Activated CD4-positive, alpha-beta memory T cell treated with anti-CD3 and anti-CD28 coated beads for 36 hours (primary cell): ENCODE measurements at regions of chr13 and their contacts with region 1.

Region 1: GRCh38 chr13:30577401-30577852 is 40.3 kb upstream of the USPL1 start:
- DNase-seq: peak; percentile 80
- H3K4me3 Mint-ChIP-seq: no peak overlapping the region
- H3K27ac Mint-ChIP-seq: peak overlapping the region; percentile 11
- H3K4me1 Mint-ChIP-seq: peaks cover 23% of the 10 kb centered on the region
- H3K27me3 Mint-ChIP-seq: peaks cover 1% of the 10 kb centered on the region

Region 2: GRCh38 chr13:30204564-30204963 is 372.9 kb before region 1 on chr13:
- CTCF ChIA-PET with region 1: no interaction called
- POLR2A ChIA-PET with region 1: no interaction called
- intact Hi-C with region 1: loop called (anchors 5 kb)
- DNase-seq: peak; percentile 39
- H3K4me3 Mint-ChIP-seq: no peak overlapping the region
- H3K27ac Mint-ChIP-seq: no peak overlapping the region
- H3K4me1 Mint-ChIP-seq: peaks cover 8% of the 10 kb centered on the region
- H3K27me3 Mint-ChIP-seq: no peaks in the 10 kb centered on the region

Region 3: GRCh38 chr13:30607908-30608307 is 30.5 kb after region 1 on chr13:
- CTCF ChIA-PET with region 1: interaction called, 3 read pairs
- POLR2A ChIA-PET with region 1: interaction called, 3 read pairs
- intact Hi-C with region 1: loop called (anchors 2 kb)
- DNase-seq: peak; percentile 81
- H3K4me3 Mint-ChIP-seq: no peak overlapping the region
- H3K27ac Mint-ChIP-seq: no peak overlapping the region
- H3K4me1 Mint-ChIP-seq: peaks cover 18% of the 10 kb centered on the region
- H3K27me3 Mint-ChIP-seq: no peaks in the 10 kb centered on the region

Region 4: DNA sequence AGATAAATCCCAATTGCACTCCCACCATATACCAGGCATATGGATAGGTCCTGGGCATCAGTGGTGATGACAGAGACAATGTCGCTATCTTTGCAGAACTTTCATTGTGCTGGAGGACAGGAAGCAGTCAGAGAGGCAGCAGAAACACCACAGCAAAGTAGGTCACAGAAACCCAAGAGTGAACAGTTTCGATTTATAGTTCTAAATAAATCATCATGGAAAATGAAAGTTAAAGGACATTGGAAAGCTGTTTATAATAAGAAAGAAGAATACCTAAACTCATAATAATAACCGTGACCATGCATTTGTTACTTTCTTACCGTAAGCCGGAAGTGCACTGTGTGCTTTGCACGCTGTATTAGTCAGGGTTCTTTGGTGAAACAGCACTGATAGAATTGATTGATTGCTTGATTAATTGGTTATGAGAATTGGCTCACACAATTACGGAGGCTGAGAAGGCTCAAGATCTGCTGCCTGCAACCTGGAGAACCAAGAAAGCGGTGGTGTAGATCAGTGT is 196.8 kb after region 1 on chr13:
- CTCF ChIA-PET with region 1: no interaction called
- POLR2A ChIA-PET with region 1: no interaction called
- intact Hi-C with region 1: loop called (anchors 1 kb)
- DNase-seq: peak; percentile 56
- H3K4me3 Mint-ChIP-seq: peak overlapping the region; percentile 0
- H3K27ac Mint-ChIP-seq: peak overlapping the region; percentile 53
- H3K4me1 Mint-ChIP-seq: peaks cover 24% of the 10 kb centered on the region
- H3K27me3 Mint-ChIP-seq: no peaks in the 10 kb centered on the region

Region 5: DNA sequence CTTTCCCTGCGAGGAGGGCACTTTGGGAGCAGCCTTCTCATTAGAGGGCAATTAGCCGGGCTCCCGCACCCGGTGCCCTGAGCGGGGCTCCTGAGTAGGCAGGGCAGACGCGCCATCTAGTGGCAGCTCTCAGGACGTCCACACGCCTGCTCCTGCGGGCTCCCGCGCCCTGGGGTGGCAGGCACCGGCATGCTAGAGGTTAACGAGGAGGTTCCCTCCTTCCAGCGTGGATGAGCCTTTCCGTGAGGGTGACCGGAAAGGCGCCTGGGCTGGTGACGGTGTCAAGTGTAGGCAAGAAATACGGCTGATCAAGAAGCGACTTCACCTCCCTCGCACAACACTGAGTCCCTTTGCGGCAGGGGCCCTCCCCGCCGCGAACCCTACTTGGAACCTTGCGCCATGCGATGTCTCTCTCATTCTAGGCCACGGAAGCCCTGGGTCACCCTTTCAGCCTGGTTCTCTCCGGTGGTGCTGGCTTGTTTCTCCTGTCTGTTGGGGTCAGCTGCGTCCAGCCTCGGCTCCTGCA is 225.6 kb after region 1 on chr13:
- CTCF ChIA-PET with region 1: no interaction called
- POLR2A ChIA-PET with region 1: no interaction called
- intact Hi-C with region 1: loop called (anchors 5 kb)
- DNase-seq: peak; percentile 89
- H3K4me3 Mint-ChIP-seq: no peak overlapping the region
- H3K27ac Mint-ChIP-seq: no peak overlapping the region
- H3K4me1 Mint-ChIP-seq: peaks cover 14% of the 10 kb centered on the region
- H3K27me3 Mint-ChIP-seq: no peaks in the 10 kb centered on the region